OCI-LY7 (cell line): ENCODE measurements at regions of chr12 and their contacts with region 1.

Region 1: DNA sequence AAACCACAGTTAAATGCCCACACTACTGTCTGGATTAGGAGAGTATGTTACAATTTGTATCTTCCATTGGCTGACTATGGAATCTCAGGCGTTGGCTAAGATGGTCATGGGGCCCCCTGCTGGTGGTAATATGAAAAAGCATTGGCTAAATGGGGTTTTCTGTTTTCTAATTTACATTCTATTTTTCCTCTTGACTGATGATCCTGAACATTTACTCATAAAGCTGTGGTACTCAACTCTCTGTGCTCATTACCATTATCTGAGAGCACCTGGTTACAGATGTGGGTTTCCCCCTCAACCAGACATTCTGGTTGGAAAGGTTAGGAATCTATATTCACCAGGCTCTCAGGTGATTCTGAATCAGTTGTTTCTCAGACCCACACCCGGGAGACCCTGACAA is 64.8 kb downstream of the WSCD2 start:
- DNase-seq: peak; percentile 32
- H3K4me3 ChIP-seq: no peak overlapping the region
- H3K27ac ChIP-seq: no peak overlapping the region
- H3K4me1 ChIP-seq: no peaks in the 10 kb centered on the region
- CTCF ChIP-seq: peak; percentile 93

Region 2: DNA sequence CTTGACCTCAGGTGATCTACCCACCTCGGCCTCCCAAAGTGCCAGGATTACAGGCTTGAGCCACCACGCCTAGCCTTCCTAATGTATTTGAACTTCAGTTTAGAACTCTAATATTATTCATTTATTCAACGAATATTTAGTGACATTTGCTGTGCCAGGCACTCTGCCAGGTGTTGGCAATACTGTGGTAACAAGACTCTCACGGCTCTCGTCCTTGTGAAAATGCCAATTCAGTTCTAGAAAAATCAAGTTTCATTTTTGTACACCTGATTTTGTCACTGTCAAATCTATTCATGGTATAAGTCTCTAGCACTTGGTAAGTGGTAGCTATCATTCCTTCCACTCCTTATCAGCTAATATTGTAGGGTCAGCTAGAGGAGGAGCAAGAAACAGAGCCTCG is 514.6 kb before region 1 on chr12:
- CTCF ChIA-PET with region 1: no interaction called
- POLR2A ChIA-PET with region 1: no interaction called
- intact Hi-C with region 1: loop called (anchors 5 kb)
- DNase-seq: no peak
- H3K4me3 ChIP-seq: no peak overlapping the region
- H3K27ac ChIP-seq: no peak overlapping the region
- H3K4me1 ChIP-seq: no peaks in the 10 kb centered on the region
- CTCF ChIP-seq: no peak

Region 3: GRCh38 chr12:107900588-107900987 is 293.3 kb before region 1 on chr12:
- CTCF ChIA-PET with region 1: no interaction called
- POLR2A ChIA-PET with region 1: no interaction called
- intact Hi-C with region 1: no loop called
- DNase-seq: no peak
- H3K4me3 ChIP-seq: no peak overlapping the region
- H3K27ac ChIP-seq: no peak overlapping the region
- H3K4me1 ChIP-seq: peaks cover 3% of the 10 kb centered on the region
- CTCF ChIP-seq: no peak

Region 4: GRCh38 chr12:107912421-107913004 is 281.4 kb before region 1 on chr12:
- CTCF ChIA-PET with region 1: no interaction called
- POLR2A ChIA-PET with region 1: no interaction called
- intact Hi-C with region 1: loop called (anchors 10 kb)
- DNase-seq: peak; percentile 14
- H3K4me3 ChIP-seq: no peak overlapping the region
- H3K27ac ChIP-seq: no peak overlapping the region
- H3K4me1 ChIP-seq: no peaks in the 10 kb centered on the region
- CTCF ChIP-seq: peak; percentile 78

Region 5: GRCh38 chr12:108156717-108157116 is 37.2 kb before region 1 on chr12:
- CTCF ChIA-PET with region 1: no interaction called
- POLR2A ChIA-PET with region 1: no interaction called
- intact Hi-C with region 1: no loop called
- DNase-seq: no peak
- H3K4me3 ChIP-seq: no peak overlapping the region
- H3K27ac ChIP-seq: no peak overlapping the region
- H3K4me1 ChIP-seq: no peaks in the 10 kb centered on the region
- CTCF ChIP-seq: no peak

Region 6: DNA sequence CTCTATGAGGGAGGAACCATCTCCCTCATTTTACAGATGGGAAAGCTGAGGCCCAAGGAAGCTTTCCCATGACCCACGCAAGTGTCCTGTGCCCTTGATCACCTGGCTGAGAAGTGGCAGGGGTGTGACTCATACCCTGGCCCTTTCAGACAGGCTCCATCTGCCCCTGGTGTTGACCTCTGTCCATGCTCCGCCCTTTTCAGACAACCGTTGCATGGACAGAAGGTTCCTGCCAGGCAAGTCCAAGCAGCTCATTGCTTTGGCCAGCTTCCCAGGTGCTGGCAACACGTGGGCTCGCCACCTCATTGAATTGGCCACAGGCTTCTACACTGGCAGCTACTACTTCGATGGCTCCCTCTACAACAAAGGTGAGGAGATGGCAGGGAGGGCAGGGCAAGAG is 38.6 kb after region 1 on chr12:
- CTCF ChIA-PET with region 1: no interaction called
- POLR2A ChIA-PET with region 1: no interaction called
- intact Hi-C with region 1: no loop called
- DNase-seq: no peak
- H3K4me3 ChIP-seq: no peak overlapping the region
- H3K27ac ChIP-seq: no peak overlapping the region
- H3K4me1 ChIP-seq: no peaks in the 10 kb centered on the region
- CTCF ChIP-seq: no peak